ENCODE measurements at regions of chr16 and their contacts with region 1.

Region 1: DNA sequence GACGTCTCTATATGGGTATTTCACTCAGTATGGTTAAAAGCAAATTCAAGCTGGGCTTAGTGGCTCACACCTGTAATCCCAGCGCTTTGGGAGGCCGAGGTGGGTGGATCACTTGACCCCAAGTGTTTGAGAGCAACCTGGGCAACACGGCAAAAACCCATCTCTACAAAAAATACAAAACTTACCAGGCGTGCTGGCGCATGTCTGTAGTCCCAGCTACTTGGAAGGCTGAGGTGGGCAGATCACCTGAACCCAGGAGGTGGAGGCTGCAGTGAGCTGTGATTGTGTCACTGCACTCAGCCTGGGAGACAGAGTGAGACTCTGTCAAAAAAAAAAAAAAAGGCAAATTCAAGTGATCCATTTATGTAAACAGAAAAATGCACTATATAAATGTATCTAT is 1.3 kb upstream of the TNFRSF17 start:
- DNase-seq: no peak
- ATAC-seq: no peak
- H3K4me3 Mint-ChIP-seq: no peak overlapping the region
- H3K27ac Mint-ChIP-seq: no peak overlapping the region
- H3K4me1 Mint-ChIP-seq: no peaks in the 10 kb centered on the region
- H3K27me3 Mint-ChIP-seq: peaks cover 2% of the 10 kb centered on the region
- CTCF ChIP-seq: no peak

Region 2: GRCh38 chr16:11836650-11837244 is 127.0 kb before region 1 on chr16:
- CTCF ChIA-PET with region 1: no interaction called
- POLR2A ChIA-PET with region 1: no interaction called
- intact Hi-C with region 1: no loop called
- DNase-seq: no peak
- ATAC-seq: no peak
- H3K4me3 Mint-ChIP-seq: no peak overlapping the region
- H3K27ac Mint-ChIP-seq: no peak overlapping the region
- H3K4me1 Mint-ChIP-seq: no peaks in the 10 kb centered on the region
- H3K27me3 Mint-ChIP-seq: no peaks in the 10 kb centered on the region
- CTCF ChIP-seq: no peak

Region 3: DNA sequence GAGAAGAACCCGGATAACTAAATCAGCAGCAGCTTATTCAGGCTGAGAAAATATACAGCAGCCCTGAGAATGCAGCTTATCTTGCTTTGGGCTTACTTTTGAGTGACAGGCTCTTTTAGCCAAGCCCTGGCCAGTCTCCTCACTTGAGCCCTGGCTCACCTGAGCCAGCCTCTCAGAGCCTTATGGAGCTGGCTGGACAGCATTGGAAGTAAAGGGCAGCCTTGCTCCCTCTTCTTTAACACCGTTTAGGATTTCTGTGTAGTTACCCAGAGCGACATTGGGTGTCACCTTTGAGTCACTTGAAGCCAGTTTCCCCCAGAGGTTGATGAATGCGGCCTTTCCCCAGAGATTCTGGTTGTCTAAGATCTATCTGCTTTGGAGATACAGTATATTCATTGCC is 14.2 kb before region 1 on chr16:
- CTCF ChIA-PET with region 1: interaction called, 4 read pairs
- POLR2A ChIA-PET with region 1: interaction called, 4 read pairs
- intact Hi-C with region 1: loop called (anchors 1 kb)
- DNase-seq: peak; percentile 36
- ATAC-seq: peak; percentile 70
- H3K4me3 Mint-ChIP-seq: no peak overlapping the region
- H3K27ac Mint-ChIP-seq: no peak overlapping the region
- H3K4me1 Mint-ChIP-seq: no peaks in the 10 kb centered on the region
- H3K27me3 Mint-ChIP-seq: no peaks in the 10 kb centered on the region
- CTCF ChIP-seq: peak; percentile 49

Region 4: GRCh38 chr16:11986521-11987057 is 22.9 kb after region 1 on chr16:
- CTCF ChIA-PET with region 1: no interaction called
- POLR2A ChIA-PET with region 1: no interaction called
- intact Hi-C with region 1: no loop called
- DNase-seq: no peak
- ATAC-seq: no peak
- H3K4me3 Mint-ChIP-seq: no peak overlapping the region
- H3K27ac Mint-ChIP-seq: no peak overlapping the region
- H3K4me1 Mint-ChIP-seq: no peaks in the 10 kb centered on the region
- H3K27me3 Mint-ChIP-seq: no peaks in the 10 kb centered on the region
- CTCF ChIP-seq: no peak

Region 5: GRCh38 chr16:12089492-12090150 is 125.9 kb after region 1 on chr16:
- CTCF ChIA-PET with region 1: no interaction called
- POLR2A ChIA-PET with region 1: no interaction called
- intact Hi-C with region 1: no loop called
- DNase-seq: peak; percentile 65
- ATAC-seq: peak; percentile 92
- H3K4me3 Mint-ChIP-seq: peak overlapping the region; percentile 70
- H3K27ac Mint-ChIP-seq: peak overlapping the region; percentile 93
- H3K4me1 Mint-ChIP-seq: peaks cover 34% of the 10 kb centered on the region
- H3K27me3 Mint-ChIP-seq: no peaks in the 10 kb centered on the region
- CTCF ChIP-seq: no peak

Measured in activated CD8-positive, alpha-beta T cell treated with anti-CD3 and anti-CD28 coated beads for 36 hours (primary cell).